ENCODE measurements at regions of chr7 and their contacts with region 1.

Region 1: DNA sequence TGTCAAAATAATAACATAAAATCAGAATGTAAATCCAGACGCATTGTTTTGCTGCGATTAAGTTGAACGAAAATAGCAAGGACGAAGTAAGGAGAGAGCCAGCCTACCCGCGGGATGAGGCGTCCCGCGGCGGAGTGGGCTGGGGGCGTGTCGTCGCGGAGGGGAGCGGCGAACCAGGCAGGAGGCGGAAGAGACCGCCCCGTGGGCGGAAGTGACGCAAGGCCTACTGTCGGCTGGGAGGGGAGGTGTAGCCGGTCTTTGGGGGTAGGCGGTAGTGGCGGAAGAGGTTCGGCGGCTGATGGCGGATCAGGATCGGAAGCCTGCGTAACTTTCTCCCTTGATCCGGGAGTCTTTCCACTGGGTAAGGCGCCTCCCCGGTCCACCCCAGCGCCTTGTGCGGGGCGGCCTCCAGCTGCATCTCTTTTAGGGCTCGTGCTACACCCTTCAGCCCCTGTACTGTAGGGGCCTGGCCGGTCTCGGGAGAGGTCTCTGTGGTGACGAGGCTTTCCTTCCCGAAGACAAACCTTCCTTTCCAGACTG is at the start of gene TAX1BP1:
- DNase-seq: peak; percentile 96 to 97 (median 96)
- H3K4me3 ChIP-seq: peak within 1 kb of the TSS; percentile 83
- H3K27ac ChIP-seq: peak within 1 kb of the TSS; percentile 87 to 91
- H3K4me1 ChIP-seq: peaks cover 1% of the 10 kb centered on the region
- H3K27me3 ChIP-seq: no peaks in the 10 kb centered on the region
- CTCF ChIP-seq: peak in 1 of 3 donors; percentile 9
- EP300 ChIP-seq: no peak
- POLR2A ChIP-seq: peak; percentile 100
- total RNA-seq, gene TAX1BP1: 70.3 to 106 (median 96.9) TPM

Region 2: DNA sequence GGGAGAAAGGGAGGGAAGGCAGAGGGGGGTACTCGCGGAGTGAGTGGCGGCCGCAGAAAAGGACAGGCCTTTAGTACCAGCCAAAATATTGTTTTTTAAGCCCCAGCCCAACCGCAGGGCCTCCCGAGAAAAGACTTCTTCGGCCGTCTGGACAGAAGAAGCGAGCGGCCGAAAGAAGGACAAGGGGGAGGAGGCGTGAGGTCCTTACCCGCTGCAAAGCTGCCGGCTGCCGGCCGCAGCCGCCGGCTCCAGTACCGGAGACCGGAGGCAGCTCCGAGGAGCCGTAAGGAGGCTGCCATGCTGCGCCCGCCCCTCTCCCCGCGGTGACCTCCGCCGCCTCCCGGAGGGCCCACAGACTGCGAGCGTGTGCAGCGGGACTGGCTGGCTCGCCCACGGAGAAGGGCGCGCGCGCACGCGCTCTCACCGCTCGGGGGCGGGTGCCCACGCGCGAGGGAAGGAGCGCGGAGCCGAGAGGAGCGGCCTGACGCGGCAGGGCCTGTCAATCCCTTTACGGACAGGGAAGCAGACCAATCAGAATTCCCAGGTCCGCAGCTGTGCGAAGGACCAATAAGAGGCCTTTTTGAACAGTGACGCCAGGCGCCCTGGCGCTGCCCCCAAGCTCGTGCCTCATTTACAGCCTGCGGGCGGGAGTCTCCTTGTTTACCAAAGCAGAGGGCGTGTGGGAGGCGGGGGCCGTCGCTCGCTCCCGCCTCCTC is 77.3 kb before region 1 on chr7 and contains the start of gene HIBADH:
- intact Hi-C with region 1: loop called in 2 of 4 experiments (anchors 2 kb)
- DNase-seq: peak; percentile 98 to 100 (median 99)
- H3K4me3 ChIP-seq: peak within 1 kb of the TSS; percentile 91
- H3K27ac ChIP-seq: peak within 1 kb of the TSS; percentile 69 to 84
- H3K4me1 ChIP-seq: no peaks in the 10 kb centered on the region
- H3K27me3 ChIP-seq: no peaks in the 10 kb centered on the region
- CTCF ChIP-seq: peak; percentile 16 to 69 (median 58)
- EP300 ChIP-seq: peak; percentile 68
- POLR2A ChIP-seq: peak; percentile 90
- total RNA-seq, gene HIBADH: 24.4 to 47.2 (median 36.9) TPM

Region 3: GRCh38 chr7:27774717-27775328 is 34.8 kb after region 1 on chr7:
- intact Hi-C with region 1: no loop called
- DNase-seq: no peak
- H3K4me3 ChIP-seq: no peak overlapping the region
- H3K27ac ChIP-seq: no peak overlapping the region
- H3K4me1 ChIP-seq: no peaks in the 10 kb centered on the region
- H3K27me3 ChIP-seq: no peaks in the 10 kb centered on the region
- CTCF ChIP-seq: peak in 2 of 3 donors; percentile 20 to 51
- EP300 ChIP-seq: no peak
- POLR2A ChIP-seq: no peak

Region 4: DNA sequence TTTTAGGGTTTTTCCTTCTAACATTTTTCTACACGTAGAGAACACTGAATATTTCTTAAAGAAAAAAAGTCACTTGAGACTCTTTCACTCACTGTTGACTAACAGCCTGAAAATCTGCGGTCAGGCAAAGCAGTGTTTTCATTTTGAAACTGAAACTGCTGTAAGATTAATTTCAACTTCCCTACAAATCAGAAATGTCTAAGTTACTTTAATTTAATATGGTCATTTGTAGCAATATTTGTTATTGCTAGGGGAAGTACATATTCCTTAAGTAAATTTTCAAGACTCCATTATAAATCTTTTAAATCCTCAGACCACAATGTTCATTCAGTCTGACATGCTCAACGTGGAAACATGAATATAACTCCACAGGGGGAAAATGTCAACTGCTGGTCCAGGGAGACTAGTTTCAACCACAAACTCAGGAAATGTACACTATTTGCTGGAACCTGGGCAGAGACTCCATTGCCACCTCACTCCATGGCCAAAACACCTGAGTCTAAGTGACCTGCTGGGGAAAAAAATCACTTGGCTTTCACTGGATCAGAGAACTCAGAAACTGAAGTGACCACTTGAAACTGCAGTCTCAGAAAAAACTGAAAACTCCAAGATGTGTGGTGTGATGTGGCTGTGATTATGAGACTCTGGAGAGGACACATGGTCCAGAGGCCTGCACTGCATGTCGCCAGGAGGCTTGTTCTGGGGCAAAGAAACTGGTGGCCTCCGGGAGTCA is 161.2 kb after region 1 on chr7:
- intact Hi-C with region 1: loop called in 1 of 4 experiments (anchors 10 kb)
- DNase-seq: no peak
- H3K4me3 ChIP-seq: no peak overlapping the region
- H3K27ac ChIP-seq: no peak overlapping the region
- H3K4me1 ChIP-seq: peaks cover 9% of the 10 kb centered on the region
- H3K27me3 ChIP-seq: no peaks in the 10 kb centered on the region
- CTCF ChIP-seq: no peak
- EP300 ChIP-seq: no peak
- POLR2A ChIP-seq: no peak

Region 5: GRCh38 chr7:28017372-28017771 is 277.4 kb after region 1 on chr7:
- intact Hi-C with region 1: loop called in 1 of 4 experiments (anchors 10 kb)
- DNase-seq: no peak
- H3K4me3 ChIP-seq: no peak overlapping the region
- H3K27ac ChIP-seq: no peak overlapping the region
- H3K4me1 ChIP-seq: peaks cover 5% of the 10 kb centered on the region
- H3K27me3 ChIP-seq: no peaks in the 10 kb centered on the region
- CTCF ChIP-seq: no peak
- EP300 ChIP-seq: no peak
- POLR2A ChIP-seq: no peak

Measured in ovary (tissue), 10 donors.